Gastrocnemius medialis (tissue), 4 donors: ENCODE measurements at regions of chr3 and their contacts with region 1.

Region 1: DNA sequence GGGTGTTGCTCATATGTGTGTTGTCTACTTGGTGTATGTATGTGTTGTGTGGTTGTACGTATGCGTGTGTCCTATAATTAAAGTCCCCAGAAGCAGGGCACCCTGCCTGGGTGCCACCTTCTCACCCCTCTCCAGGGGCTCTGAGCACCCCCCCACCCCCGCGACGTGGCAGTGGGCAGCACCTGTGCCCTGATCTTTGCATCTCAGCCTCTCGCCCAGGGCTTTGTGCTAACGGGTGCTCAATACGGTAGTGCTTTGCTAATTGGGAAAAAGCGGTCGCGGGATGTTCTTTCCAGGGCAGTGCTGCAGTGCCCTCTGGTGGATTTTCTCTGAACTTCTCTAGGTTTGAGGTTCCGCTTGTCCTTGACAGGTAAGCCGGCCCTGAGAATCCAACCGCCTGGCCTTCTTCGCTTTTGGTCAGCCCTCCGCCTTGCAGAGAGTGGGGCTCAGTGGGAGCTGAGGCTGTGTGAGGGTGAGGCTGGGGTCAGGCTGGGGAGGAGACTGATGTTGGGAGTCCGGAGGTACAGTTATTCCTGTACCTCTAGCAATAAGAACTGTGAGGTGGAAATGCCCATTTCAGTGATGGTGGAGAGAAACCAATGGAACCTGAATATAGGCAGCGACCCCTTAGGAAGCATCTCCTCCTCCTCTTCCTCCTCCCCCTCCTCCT is 17.6 kb upstream of the EPHB3 start:
- DNase-seq: peak; percentile 44 to 58
- ATAC-seq: peak; percentile 85 to 93
- H3K4me3 ChIP-seq: peak overlapping the region in 2 of 4 donors; percentile 11 to 43
- H3K27ac ChIP-seq: no peak overlapping the region
- H3K4me1 ChIP-seq: no peaks in the 10 kb centered on the region
- H3K27me3 ChIP-seq: peaks cover 10 to 15% (median 14%) of the 10 kb centered on the region in 3 donors
- CTCF ChIP-seq: peak; percentile 80 to 98 (median 86)
- POLR2A ChIP-seq: no peak

Region 2: DNA sequence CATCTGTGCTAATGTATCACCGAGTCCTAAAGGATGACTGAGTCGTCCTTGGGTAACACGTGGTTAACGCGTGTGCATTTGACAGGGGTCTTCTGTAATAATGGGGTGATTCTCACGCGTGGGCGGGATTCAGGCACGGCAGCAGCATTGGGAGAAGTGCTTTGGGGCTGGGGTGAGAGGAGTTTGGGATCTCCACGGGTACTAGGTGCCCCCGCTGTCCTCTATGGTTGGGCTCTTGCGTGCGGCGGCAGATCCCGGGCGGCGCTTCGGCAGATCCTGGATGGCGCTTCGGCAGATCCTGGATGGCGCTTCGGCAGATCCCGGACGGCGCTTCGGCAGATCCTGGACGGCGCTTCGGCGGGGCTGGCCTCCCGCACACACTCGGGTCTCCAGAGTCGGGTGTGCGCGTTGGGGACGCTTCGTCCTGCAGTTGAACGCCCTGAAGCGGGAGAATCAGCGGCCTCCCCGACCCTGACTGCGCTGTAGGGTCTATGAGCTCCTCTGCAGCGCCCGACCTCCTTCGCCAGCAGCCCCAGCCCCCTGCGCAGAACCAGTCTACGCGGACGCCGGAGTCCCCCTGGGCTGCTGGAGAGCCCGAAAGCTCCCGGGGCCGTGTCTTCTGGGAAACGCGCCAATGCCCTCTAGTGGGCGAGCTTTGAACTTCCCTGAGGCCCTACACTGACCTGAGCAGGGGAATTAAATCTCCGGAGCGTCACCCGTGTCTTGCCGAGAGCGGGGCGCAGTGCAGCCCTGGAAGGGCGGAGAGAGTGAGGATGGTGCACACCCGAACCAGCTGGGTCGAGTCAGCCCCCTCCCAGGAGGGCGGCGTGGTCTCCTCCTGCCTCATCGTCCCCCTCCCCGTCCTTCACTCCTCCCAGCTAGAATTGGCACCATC is 30.5 kb before region 1 on chr3:
- in situ Hi-C with region 1: no loop called
- intact Hi-C with region 1: loop called (anchors 1 kb)
- DNase-seq: peak; percentile 69
- ATAC-seq: peak; percentile 98 to 99
- H3K4me3 ChIP-seq: peak overlapping the region; percentile 41 to 64 (median 52)
- H3K27ac ChIP-seq: peak overlapping the region in 1 of 4 donors; percentile 28
- H3K4me1 ChIP-seq: peaks cover 4 to 5% of the 10 kb centered on the region in 2 donors
- H3K27me3 ChIP-seq: peaks cover 19 to 37% (median 22%) of the 10 kb centered on the region in 3 donors
- CTCF ChIP-seq: peak; percentile 72 to 92 (median 88)
- POLR2A ChIP-seq: no peak